ENCODE measurements at regions of chr6 and their contacts with region 1.

Region 1: GRCh38 chr6:40308533-40309306 is 278.4 kb downstream of the LRFN2 start:
- DNase-seq: peak; percentile 26
- ATAC-seq: peak; percentile 94
- H3K4me3 ChIP-seq: no peak overlapping the region
- H3K27ac ChIP-seq: no peak overlapping the region
- H3K4me1 ChIP-seq: no peaks in the 10 kb centered on the region
- H3K27me3 ChIP-seq: peaks cover 4% of the 10 kb centered on the region; the same call in 1 of the 2 replicates
- CTCF ChIP-seq: peak; percentile 67
- POLR2A ChIP-seq: no peak
- RAD21 ChIP-seq: peak; percentile 61

Region 2: GRCh38 chr6:39347906-39348585 is 960.7 kb before region 1 on chr6:
- CTCF ChIA-PET with region 1: no interaction called
- POLR2A ChIA-PET with region 1: no interaction called
- dilution Hi-C with region 1: no loop called
- in situ Hi-C with region 1: loop called (anchors 10 kb)
- intact Hi-C with region 1: loop called (anchors 1 kb)
- DNase-seq: peak; percentile 51
- ATAC-seq: peak; percentile 99
- H3K4me3 ChIP-seq: no peak overlapping the region
- H3K27ac ChIP-seq: no peak overlapping the region
- H3K4me1 ChIP-seq: no peaks in the 10 kb centered on the region
- H3K27me3 ChIP-seq: no peaks in the 10 kb centered on the region; the same call in 1 of the 2 replicates
- CTCF ChIP-seq: peak; percentile 82
- POLR2A ChIP-seq: no peak
- RAD21 ChIP-seq: peak; percentile 82

Region 3: GRCh38 chr6:39377539-39377950 is 931.2 kb before region 1 on chr6:
- CTCF ChIA-PET with region 1: no interaction called
- POLR2A ChIA-PET with region 1: no interaction called
- dilution Hi-C with region 1: no loop called
- in situ Hi-C with region 1: no loop called
- intact Hi-C with region 1: loop called (anchors 5 kb)
- DNase-seq: peak; percentile 44
- ATAC-seq: peak; percentile 82
- H3K4me3 ChIP-seq: no peak overlapping the region
- H3K27ac ChIP-seq: no peak overlapping the region
- H3K4me1 ChIP-seq: no peaks in the 10 kb centered on the region
- H3K27me3 ChIP-seq: peaks cover 3% of the 10 kb centered on the region
- CTCF ChIP-seq: peak; percentile 58
- POLR2A ChIP-seq: no peak
- RAD21 ChIP-seq: peak; percentile 76

Region 4: DNA sequence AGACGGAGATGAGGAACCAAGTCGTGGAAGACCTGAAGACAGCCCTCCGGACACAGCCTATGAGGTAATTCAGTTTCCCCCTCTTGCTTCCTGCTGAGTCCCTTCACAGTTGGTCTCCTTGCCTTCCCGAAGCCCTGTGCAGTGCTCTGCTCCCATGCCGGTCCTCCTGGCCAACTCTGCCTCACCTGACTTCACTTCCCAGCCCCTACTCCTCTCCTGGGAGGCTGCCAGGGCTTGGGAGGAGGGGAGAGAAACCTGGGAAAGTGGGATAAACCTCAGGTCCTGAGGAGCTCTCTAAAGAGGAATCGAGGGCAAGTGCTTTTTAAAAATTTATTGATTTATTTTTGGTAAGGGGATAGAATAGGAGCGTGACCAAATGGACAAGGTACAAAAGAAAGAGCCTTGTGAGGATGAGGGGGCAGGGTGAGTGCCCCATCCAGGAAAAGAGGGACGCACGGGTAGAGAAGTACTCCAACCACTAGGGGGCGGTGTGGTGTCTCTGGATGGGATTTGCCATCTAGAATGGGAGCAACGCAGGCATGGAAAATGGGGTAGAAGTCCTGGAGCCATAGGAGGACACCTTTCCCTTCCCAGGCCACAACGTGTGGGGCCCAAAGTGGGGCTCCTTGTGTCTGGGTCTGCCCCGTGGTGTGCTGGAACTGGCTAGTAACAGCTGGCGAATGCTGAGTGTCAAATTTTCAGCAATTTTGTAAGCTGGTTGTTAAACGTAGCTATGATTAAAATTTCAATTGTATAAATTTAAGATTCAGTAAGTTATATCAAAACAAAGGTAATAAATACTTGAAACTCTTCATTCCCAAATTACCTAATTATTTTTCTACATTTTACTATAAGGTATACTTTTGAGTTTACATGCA is 443.5 kb before region 1 on chr6:
- CTCF ChIA-PET with region 1: no interaction called
- POLR2A ChIA-PET with region 1: no interaction called
- dilution Hi-C with region 1: no loop called
- in situ Hi-C with region 1: no loop called
- intact Hi-C with region 1: loop called (anchors 1 kb)
- DNase-seq: peak; percentile 60
- ATAC-seq: peak; percentile 90
- H3K4me3 ChIP-seq: no peak overlapping the region
- H3K27ac ChIP-seq: no peak overlapping the region
- H3K4me1 ChIP-seq: no peaks in the 10 kb centered on the region
- H3K27me3 ChIP-seq: no peaks in the 10 kb centered on the region
- CTCF ChIP-seq: peak; percentile 74
- POLR2A ChIP-seq: no peak
- RAD21 ChIP-seq: peak; percentile 81

Region 5: GRCh38 chr6:39980839-39981580 is 327.7 kb before region 1 on chr6:
- CTCF ChIA-PET with region 1: interaction called, 6 read pairs
- POLR2A ChIA-PET with region 1: no interaction called
- dilution Hi-C with region 1: no loop called
- in situ Hi-C with region 1: loop called (anchors 5 kb)
- intact Hi-C with region 1: loop called (anchors 1 kb)
- DNase-seq: peak; percentile 57
- ATAC-seq: peak; percentile 89
- H3K4me3 ChIP-seq: no peak overlapping the region
- H3K27ac ChIP-seq: no peak overlapping the region
- H3K4me1 ChIP-seq: peaks cover 5% of the 10 kb centered on the region
- H3K27me3 ChIP-seq: 0 out of 2 replicates have a peak, but pooled peaks cover 2% of the 10 kb centered on the region
- CTCF ChIP-seq: peak; percentile 66
- POLR2A ChIP-seq: no peak
- RAD21 ChIP-seq: peak; percentile 67

Measured in IMR-90 (cell line).